Endothelial cell of umbilical vein (primary cell): ENCODE measurements at regions of chr1 and their contacts with region 1.

Region 1: GRCh38 chr1:33472349-33472980 is at the start of gene ZSCAN20:
- DNase-seq: peak; percentile 99
- H3K4me3 ChIP-seq: peak within 1 kb of the TSS; percentile 70 to 73 (median 72)
- H3K27ac ChIP-seq: peak within 1 kb of the TSS; percentile 63
- H3K4me1 ChIP-seq: peaks cover 13% of the 10 kb centered on the region
- H3K27me3 ChIP-seq: no peaks in the 10 kb centered on the region
- CTCF ChIP-seq: no peak
- POLR2A ChIP-seq: peak; percentile 71
- total RNA-seq, gene ZSCAN20: 4.7 and 5.8 TPM in 2 replicates

Region 2: DNA sequence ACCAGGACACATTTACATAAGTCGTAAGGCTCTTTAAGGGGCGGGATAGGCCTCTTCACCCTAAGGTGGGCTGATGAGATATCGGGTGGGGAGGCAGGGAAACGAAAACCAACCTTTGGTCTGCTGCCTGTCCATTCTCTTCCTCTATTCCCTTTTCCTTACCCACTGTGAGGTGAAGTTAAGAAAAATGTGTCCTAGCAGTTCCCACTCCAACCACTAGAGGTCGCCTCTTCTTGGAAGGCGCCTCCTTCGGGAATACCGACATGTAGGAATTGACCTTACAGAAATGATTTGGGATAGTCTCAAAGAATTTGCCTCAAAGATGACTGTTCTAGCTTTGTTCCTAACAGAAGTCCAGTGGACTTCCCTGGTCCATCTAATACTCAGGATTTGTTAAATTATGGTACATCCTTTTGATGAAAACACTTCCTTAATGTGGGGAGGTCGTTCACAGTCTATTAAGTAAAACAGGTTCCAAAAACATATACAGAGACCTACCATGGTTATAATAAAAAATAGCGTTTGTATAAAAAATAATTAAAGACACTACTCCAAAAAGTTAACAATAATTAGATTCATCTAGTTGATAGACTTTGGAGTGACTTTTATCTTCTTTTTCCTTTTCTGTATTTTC is 377.4 kb before region 1 on chr1:
- CTCF ChIA-PET with region 1: interaction called, 3 read pairs
- POLR2A ChIA-PET with region 1: no interaction called
- dilution Hi-C with region 1: no loop called
- intact Hi-C with region 1: loop called (anchors 1 kb)
- DNase-seq: peak; percentile 76
- H3K4me3 ChIP-seq: no peak overlapping the region
- H3K27ac ChIP-seq: no peak overlapping the region
- H3K4me1 ChIP-seq: no peaks in the 10 kb centered on the region
- H3K27me3 ChIP-seq: no peaks in the 10 kb centered on the region
- CTCF ChIP-seq: peak; percentile 89 to 93
- POLR2A ChIP-seq: no peak

Region 3: DNA sequence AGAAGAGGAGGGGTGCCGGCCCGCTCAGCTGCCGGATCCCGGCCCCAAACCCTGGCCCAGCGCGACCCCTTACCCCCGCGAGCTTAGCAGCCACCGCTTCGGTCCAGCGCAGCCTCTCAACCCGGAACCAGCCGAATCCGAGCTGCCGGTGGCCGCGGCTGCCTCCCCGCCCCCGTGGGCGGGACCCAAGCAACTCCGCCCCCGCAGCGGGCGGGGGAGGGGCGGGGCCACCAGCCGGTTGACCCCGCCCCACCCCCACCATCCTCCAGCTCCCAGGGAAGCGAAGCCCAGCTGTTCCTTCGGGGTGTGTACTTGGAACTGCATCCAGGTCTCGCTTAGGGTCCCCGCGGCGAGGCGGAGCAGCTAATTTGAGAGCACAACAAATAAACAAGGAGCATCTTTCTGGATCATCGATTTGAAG is 290.5 kb before region 1 on chr1 and contains the start of gene TRIM62:
- CTCF ChIA-PET with region 1: interaction called, 4 read pairs
- POLR2A ChIA-PET with region 1: no interaction called
- dilution Hi-C with region 1: no loop called
- intact Hi-C with region 1: loop called (anchors 1 kb)
- DNase-seq: peak; percentile 81
- H3K4me3 ChIP-seq: peak within 1 kb of the TSS; percentile 37 to 83 (median 64)
- H3K27ac ChIP-seq: no peak within 1 kb of the TSS
- H3K4me1 ChIP-seq: peaks cover 5% of the 10 kb centered on the region
- H3K27me3 ChIP-seq: peaks cover 15 to 20% of the 10 kb centered on the region in 2 experiments
- CTCF ChIP-seq: no peak
- POLR2A ChIP-seq: peak; percentile 64
- total RNA-seq, gene TRIM62: 8.3 and 8.6 TPM in 2 replicates

Region 4: DNA sequence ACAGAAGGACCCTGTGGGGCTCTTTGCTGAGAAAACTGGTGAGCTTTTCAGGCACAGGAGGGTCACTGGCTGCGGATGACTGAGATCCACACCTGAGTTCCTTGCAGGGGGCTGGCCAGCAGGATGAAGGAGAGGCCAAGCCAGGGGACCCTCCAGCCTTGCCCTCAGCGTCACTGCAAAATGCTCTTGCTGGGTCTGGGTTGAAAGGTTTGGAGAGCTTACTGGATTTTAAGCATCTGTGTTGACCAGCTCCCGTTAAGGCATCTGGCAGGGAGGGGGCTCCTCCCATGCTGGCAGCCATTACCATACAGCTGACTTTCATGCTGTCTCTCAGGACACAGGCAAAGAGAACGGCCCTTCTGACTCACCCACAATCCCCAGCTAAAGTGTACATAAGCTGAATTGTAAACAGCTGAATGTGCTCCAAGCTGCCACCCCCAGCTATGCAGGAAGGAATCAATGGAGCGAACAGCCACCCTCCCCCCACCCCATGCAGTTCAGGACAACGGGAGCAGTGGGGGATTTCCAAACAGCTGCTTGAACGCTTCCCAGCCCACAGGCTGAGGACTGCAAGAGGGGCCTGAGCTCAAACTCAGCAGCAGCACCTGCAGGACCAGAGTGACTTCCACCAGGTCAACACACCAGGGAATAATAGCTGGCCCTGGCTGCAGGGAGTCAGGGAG is 130.3 kb before region 1 on chr1:
- CTCF ChIA-PET with region 1: interaction called, 3 read pairs
- POLR2A ChIA-PET with region 1: no interaction called
- dilution Hi-C with region 1: no loop called
- intact Hi-C with region 1: loop called (anchors 1 kb)
- DNase-seq: peak; percentile 97
- H3K4me3 ChIP-seq: no peak overlapping the region
- H3K27ac ChIP-seq: peak overlapping the region; percentile 56
- H3K4me1 ChIP-seq: peaks cover 85% of the 10 kb centered on the region
- H3K27me3 ChIP-seq: no peaks in the 10 kb centered on the region
- CTCF ChIP-seq: no peak
- POLR2A ChIP-seq: no peak

Region 5: DNA sequence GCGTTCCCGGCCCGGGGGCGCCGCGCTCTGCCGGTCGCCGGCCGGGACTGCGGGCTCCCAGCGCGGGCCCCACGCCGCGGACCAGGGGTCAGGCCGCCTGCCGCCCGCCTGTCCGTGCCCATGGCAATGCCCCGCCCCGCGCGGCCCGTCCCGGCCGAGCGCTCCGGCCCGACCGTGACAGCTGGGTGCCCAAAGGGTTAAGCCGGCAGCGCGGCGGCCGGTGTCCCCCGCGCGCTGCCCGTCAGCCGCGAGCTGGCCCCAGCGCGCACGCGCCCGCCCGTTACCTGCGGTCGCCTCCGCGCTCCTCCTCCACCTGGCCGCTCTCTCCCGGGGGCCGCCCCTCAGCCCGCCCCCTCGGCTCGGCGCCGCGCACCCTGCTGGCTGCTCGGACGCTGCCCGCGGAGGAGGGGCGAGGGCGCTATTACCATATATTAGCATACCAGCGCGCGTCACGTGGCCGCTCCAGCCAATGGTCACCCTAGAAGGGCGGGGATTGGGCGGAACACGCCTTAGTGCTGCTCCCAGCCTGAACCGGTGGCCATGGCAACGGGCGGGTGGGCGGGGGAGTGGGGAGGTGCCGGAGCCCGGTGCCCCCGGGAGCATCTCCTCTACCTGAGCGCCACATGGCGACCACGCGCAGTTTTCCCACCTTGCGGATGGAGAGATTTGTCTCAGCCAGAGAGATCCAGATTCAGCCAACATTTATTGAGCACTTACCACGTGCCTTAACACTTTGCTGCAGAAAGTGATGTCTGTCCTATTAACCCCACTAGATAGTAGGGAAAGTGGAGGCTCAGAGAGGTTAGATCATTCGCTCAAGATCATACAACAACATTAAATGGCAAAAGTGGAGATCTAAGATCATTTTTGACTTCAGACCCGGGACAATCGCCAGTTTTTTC is 41.5 kb before region 1 on chr1 and contains the start of gene PHC2:
- CTCF ChIA-PET with region 1: interaction called, 6 read pairs
- POLR2A ChIA-PET with region 1: no interaction called
- dilution Hi-C with region 1: no loop called
- intact Hi-C with region 1: loop called (anchors 1 kb)
- DNase-seq: peak; percentile 96
- H3K4me3 ChIP-seq: peak within 1 kb of the TSS; percentile 36 to 66 (median 55)
- H3K27ac ChIP-seq: peak within 1 kb of the TSS; percentile 2
- H3K4me1 ChIP-seq: peaks cover 30% of the 10 kb centered on the region
- H3K27me3 ChIP-seq: no peaks in the 10 kb centered on the region
- CTCF ChIP-seq: peak in 1 of 2 donors; percentile 22
- POLR2A ChIP-seq: no peak
- total RNA-seq, gene PHC2: 79.0 and 82.3 TPM in 2 replicates

Region 6: GRCh38 chr1:33616773-33617172 is 144.3 kb after region 1 on chr1:
- CTCF ChIA-PET with region 1: interaction called, 3 read pairs
- POLR2A ChIA-PET with region 1: no interaction called
- dilution Hi-C with region 1: no loop called
- intact Hi-C with region 1: loop called (anchors 2 kb)
- DNase-seq: no peak
- H3K4me3 ChIP-seq: no peak overlapping the region
- H3K27ac ChIP-seq: no peak overlapping the region
- H3K4me1 ChIP-seq: no peaks in the 10 kb centered on the region
- H3K27me3 ChIP-seq: no peaks in the 10 kb centered on the region
- CTCF ChIP-seq: no peak
- POLR2A ChIP-seq: no peak